MCF 10A (cell line): ENCODE measurements at regions of chr6 and their contacts with region 1.

Region 1: DNA sequence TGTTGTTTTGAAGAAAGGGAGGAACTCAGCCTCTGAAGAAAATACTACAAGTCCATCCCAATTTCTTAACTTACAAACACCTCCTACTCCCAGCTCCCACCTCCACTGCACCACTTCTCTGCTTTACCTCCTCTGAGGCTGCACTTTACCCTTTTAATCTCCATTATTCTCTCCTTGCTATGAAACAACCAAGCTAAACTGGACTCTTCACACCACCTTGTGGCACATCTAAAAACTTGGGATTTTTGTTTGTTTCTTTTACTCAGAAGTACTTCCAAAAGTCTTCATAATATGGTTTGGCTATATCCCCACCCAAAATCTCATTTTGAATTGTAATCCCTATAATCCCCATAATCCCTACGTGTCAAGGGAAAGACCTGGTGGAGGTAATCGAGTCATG is 142.2 kb downstream of the MOXD1 start:
- DNase-seq: peak; percentile 30
- H3K4me3 Mint-ChIP-seq: no peak overlapping the region
- H3K27ac Mint-ChIP-seq: no peak overlapping the region
- H3K4me1 Mint-ChIP-seq: peaks cover 10% of the 10 kb centered on the region
- H3K27me3 Mint-ChIP-seq: no peaks in the 10 kb centered on the region
- CTCF ChIP-seq: peak; percentile 28

Region 2: DNA sequence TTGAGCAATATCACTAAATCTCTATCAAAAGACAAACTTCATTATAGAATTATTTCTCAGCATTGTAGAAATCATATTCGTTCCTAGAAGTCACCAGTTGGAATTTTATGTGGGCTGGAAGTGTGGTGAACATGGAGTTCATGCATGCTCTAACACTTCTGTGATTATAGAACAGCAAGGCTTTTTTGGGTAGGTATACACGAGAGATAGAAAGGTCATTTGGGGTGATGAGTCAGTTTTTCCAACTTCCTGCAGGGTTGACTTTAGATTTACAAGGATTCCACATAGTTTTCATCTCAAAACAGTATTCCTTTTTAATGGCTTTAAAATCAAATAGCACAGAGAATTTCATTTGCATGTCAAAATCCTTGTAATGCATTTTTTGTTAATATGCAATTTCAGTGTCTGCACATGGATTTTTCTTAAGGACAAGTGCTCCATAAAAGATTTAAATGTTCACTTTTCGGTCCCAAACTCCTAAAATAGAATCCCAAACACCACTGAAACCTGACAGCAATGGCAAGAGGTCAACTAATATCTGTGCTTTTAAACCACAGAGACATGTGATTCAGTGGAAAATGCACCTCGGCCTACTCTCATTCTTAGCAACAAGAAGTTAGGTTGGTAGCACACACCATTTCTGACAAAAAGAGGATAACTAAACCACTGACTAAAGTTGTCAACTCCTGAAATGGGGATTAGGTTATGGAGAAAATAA is 68.8 kb before region 1 on chr6:
- CTCF ChIA-PET with region 1: no interaction called
- POLR2A ChIA-PET with region 1: no interaction called
- intact Hi-C with region 1: no loop called
- DNase-seq: peak; percentile 29
- H3K4me3 Mint-ChIP-seq: no peak overlapping the region
- H3K27ac Mint-ChIP-seq: peak overlapping the region; percentile 7
- H3K4me1 Mint-ChIP-seq: peaks cover 15% of the 10 kb centered on the region
- H3K27me3 Mint-ChIP-seq: no peaks in the 10 kb centered on the region
- CTCF ChIP-seq: no peak

Region 3: GRCh38 chr6:132270726-132271402 is 11.8 kb after region 1 on chr6:
- CTCF ChIA-PET with region 1: interaction called, 10 read pairs
- POLR2A ChIA-PET with region 1: interaction called, 4 read pairs
- intact Hi-C with region 1: no loop called
- DNase-seq: no peak
- H3K4me3 Mint-ChIP-seq: no peak overlapping the region
- H3K27ac Mint-ChIP-seq: no peak overlapping the region
- H3K4me1 Mint-ChIP-seq: no peaks in the 10 kb centered on the region
- H3K27me3 Mint-ChIP-seq: no peaks in the 10 kb centered on the region
- CTCF ChIP-seq: no peak